ENCODE measurements at regions of chr20 and their contacts with region 1.

Region 1: DNA sequence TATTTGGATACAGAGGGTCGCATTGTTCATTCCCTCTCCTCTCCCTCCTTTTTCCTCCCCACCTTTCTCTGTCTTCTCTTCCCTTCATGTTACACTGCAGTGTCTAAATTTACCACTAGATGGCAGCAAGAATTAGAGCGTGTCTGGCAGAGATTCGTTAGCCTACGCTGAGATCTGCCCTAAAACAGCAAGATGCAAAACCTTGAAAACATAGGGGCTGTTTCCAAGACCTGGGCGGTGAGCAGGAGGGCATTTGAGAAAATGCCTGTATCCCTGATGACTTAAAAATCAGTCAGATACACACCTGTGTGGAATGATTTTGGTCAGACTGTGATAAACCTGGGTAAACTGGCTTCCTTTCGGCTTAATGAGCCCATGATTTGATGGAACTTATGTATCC is 101.5 kb upstream of the ISM1 start:
- DNase-seq: peak in 1 of 2 donors; percentile 79
- ATAC-seq: peak; percentile 73 to 91 (median 74)
- H3K4me3 ChIP-seq: no peak overlapping the region
- H3K4me3 Mint-ChIP-seq: no peak overlapping the region
- H3K27ac ChIP-seq: no peak overlapping the region
- H3K27ac Mint-ChIP-seq: no peak overlapping the region
- H3K4me1 ChIP-seq: no peaks in the 10 kb centered on the region
- H3K4me1 Mint-ChIP-seq: no peaks in the 10 kb centered on the region
- H3K27me3 ChIP-seq: no peaks in the 10 kb centered on the region
- H3K27me3 Mint-ChIP-seq: no peaks in the 10 kb centered on the region
- CTCF ChIP-seq: peak; percentile 89

Region 2: DNA sequence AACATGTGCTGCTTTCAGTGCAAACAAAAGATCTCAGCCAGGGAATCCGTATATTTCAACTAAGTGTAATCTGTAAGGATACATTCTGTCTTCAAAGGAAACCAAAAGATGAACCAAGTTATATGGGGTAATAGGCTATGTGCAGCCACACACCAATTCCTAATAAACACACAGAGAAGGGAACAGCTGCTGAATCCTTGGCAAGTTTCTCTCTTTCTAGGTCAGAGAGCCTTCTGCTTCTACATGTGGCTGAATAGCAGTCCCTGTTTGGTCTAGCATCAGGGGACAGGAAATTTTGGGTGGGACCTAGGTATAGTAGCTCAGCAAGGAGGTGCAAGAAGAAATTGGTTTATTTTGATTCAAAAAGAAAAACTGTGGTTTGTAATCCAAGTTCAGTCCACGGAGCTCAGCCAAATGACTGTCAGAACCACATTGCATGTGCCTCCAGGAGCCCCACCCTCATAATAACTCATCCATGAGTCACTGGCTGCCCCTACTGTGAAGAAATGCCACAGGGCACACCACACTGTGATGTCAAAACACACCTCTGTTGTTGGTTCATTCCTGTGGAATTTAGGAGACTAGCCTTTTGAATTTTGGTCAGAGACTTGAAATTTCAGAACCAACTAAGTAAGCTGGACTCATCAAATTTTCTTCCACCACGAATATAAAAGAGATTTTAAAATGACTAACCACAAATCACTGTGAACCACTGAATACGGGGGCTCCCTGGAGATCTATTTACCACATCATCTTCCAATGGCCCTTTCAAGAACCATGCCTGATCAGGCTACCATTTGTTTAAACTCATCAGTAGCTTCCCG is 89.7 kb before region 1 on chr20:
- intact Hi-C with region 1: no loop called
- DNase-seq: no peak
- ATAC-seq: no peak
- H3K4me3 ChIP-seq: no peak overlapping the region
- H3K4me3 Mint-ChIP-seq: no peak overlapping the region
- H3K27ac ChIP-seq: no peak overlapping the region
- H3K27ac Mint-ChIP-seq: no peak overlapping the region
- H3K4me1 ChIP-seq: no peaks in the 10 kb centered on the region
- H3K4me1 Mint-ChIP-seq: peaks cover 0 to 7% of the 10 kb centered on the region in 2 donors
- H3K27me3 ChIP-seq: no peaks in the 10 kb centered on the region
- H3K27me3 Mint-ChIP-seq: no peaks in the 10 kb centered on the region
- CTCF ChIP-seq: no peak

Region 3: DNA sequence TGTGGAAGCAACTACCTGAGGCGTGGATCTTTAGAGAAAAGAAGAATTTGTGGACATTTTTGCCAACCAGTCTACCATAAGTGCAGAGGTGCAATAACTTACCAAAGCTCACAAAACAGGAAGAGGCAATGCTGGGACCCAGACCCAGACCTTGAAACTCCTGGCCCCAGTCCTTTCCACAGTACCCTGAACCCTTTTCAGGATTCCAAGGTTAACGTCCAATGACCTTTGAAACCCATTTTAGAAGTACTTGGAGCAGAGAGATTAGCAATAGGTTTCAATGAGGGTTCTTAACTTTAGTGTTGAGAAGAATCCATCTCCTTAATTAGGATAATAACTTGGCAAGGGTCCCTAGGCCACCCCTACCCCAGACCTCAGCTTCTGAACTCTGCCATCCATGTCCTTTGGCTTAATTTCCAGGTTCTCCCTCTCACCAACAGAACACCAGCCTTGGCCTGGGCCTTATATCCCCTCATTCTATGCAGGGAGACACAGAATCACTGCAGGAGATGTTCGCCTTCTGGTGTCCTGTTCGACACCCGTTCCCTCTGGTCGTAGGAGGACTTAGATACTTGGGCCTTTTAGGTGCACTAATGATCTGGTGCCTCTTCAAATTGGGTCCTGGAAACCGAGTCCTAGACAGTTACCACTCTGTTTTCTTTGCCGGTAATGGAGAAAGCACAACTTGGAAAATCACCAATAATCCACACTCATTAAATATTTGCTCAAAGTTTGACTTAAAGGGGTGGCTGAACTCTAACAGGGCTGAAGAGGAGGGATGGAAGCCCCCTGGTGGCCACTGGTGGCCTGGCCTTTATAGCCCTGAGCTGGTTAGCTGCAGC is 142.1 kb after region 1 on chr20:
- intact Hi-C with region 1: loop called (anchors 1 kb)
- DNase-seq: peak; percentile 37 to 81
- ATAC-seq: peak; percentile 49 to 85 (median 66)
- H3K4me3 ChIP-seq: no peak overlapping the region
- H3K4me3 Mint-ChIP-seq: no peak overlapping the region
- H3K27ac ChIP-seq: no peak overlapping the region
- H3K27ac Mint-ChIP-seq: no peak overlapping the region
- H3K4me1 ChIP-seq: no peaks in the 10 kb centered on the region
- H3K4me1 Mint-ChIP-seq: no peaks in the 10 kb centered on the region
- H3K27me3 ChIP-seq: no peaks in the 10 kb centered on the region
- H3K27me3 Mint-ChIP-seq: no peaks in the 10 kb centered on the region
- CTCF ChIP-seq: peak; percentile 68

Region 4: GRCh38 chr20:13302647-13303450 is 183.3 kb after region 1 on chr20:
- intact Hi-C with region 1: loop called (anchors 1 kb)
- DNase-seq: peak in 1 of 2 donors; percentile 55
- ATAC-seq: peak in 2 of 3 donors; percentile 42 to 71
- H3K4me3 ChIP-seq: no peak overlapping the region
- H3K4me3 Mint-ChIP-seq: no peak overlapping the region
- H3K27ac ChIP-seq: no peak overlapping the region
- H3K27ac Mint-ChIP-seq: no peak overlapping the region
- H3K4me1 ChIP-seq: no peaks in the 10 kb centered on the region
- H3K4me1 Mint-ChIP-seq: no peaks in the 10 kb centered on the region
- H3K27me3 ChIP-seq: no peaks in the 10 kb centered on the region
- H3K27me3 Mint-ChIP-seq: peaks cover 0 to 11% of the 10 kb centered on the region in 2 donors
- CTCF ChIP-seq: peak; percentile 31